Heart left ventricle (tissue), 16 donors: ENCODE measurements at regions of chr7 and their contacts with region 1.

Region 1: GRCh38 chr7:4022265-4022664 is 659.8 kb upstream of the FOXK1 start:
- DNase-seq: no peak
- ATAC-seq: no peak
- H3K4me3 ChIP-seq: no peak overlapping the region
- H3K27ac ChIP-seq: no peak overlapping the region
- H3K4me1 ChIP-seq: no peaks in the 10 kb centered on the region
- H3K27me3 ChIP-seq: no peaks in the 10 kb centered on the region
- CTCF ChIP-seq: no peak
- POLR2A ChIP-seq: no peak

Region 2: GRCh38 chr7:3778345-3778744 is 243.9 kb before region 1 on chr7:
- intact Hi-C with region 1: loop called in 1 of 10 experiments (anchors 5 kb)
- DNase-seq: no peak
- ATAC-seq: no peak
- H3K4me3 ChIP-seq: no peak overlapping the region
- H3K27ac ChIP-seq: no peak overlapping the region
- H3K4me1 ChIP-seq: no peaks in the 10 kb centered on the region
- H3K27me3 ChIP-seq: no peaks in the 10 kb centered on the region
- CTCF ChIP-seq: no peak
- POLR2A ChIP-seq: no peak

Region 3: DNA sequence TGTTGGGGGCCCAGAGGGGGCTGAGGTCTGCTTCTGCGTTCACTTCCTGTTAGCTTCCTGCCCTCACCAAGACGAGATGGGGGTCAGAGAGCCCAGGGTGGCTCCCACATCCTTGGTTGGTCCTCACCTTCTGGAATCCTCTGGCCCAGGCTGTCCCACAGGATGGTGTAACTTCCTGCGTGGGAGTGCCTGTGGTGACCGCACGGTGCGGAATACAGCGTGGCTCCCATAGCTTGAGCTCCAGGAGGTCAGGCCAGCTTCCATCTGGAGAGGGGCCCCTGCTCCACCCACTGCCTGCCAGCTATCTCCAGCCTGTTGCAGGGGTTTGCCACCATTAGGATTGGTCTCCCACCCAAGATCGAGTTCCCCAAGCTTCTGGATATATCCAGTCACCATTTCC is 21.3 kb before region 1 on chr7:
- intact Hi-C with region 1: loop called in 1 of 10 experiments (anchors 1 kb)
- DNase-seq: no peak
- ATAC-seq: peak in 1 of 4 donors; percentile 13
- H3K4me3 ChIP-seq: no peak overlapping the region
- H3K27ac ChIP-seq: no peak overlapping the region
- H3K4me1 ChIP-seq: no peaks in the 10 kb centered on the region
- H3K27me3 ChIP-seq: peaks cover 0 to 4% (median 0%) of the 10 kb centered on the region in 9 donors
- CTCF ChIP-seq: no peak
- POLR2A ChIP-seq: no peak